Activated T-helper 1 cell treated with anti-CD3 and anti-CD28 coated beads, Interleukin-12 subunit alpha, Interleukin-12 subunit beta, Interleukin-2, Interleukin-4 antibody, amounts not matched to agents 30 ng/mL and 10 ng/mL and 1 ng/mL, durations not matched to agents 14 hours and 24 hours and 36 hours (primary cell): ENCODE measurements at regions of chr1 and their contacts with region 1.

Region 1: GRCh38 chr1:243255791-243256512 is at the start of gene SDCCAG8:
- DNase-seq: peak; percentile 94
- H3K4me3 Mint-ChIP-seq: peak within 1 kb of the TSS; percentile 95
- H3K27ac Mint-ChIP-seq: peak within 1 kb of the TSS; percentile 99
- H3K4me1 Mint-ChIP-seq: peaks cover 36% of the 10 kb centered on the region
- H3K27me3 Mint-ChIP-seq: no peaks in the 10 kb centered on the region
- total RNA-seq, gene SDCCAG8: 14.6 and 17.6 TPM in 2 replicates

Region 2: GRCh38 chr1:241640029-241640818 is 1615.7 kb before region 1 on chr1 and contains the starts of genes CHML and OPN3:
- intact Hi-C with region 1: loop called (anchors 2 kb)
- DNase-seq: peak; percentile 90
- H3K4me3 Mint-ChIP-seq: peak within 1 kb of the TSS; percentile 84
- H3K27ac Mint-ChIP-seq: peak within 1 kb of the TSS; percentile 85
- H3K4me1 Mint-ChIP-seq: peaks cover 54% of the 10 kb centered on the region
- H3K27me3 Mint-ChIP-seq: no peaks in the 10 kb centered on the region
- total RNA-seq, gene CHML: 17.8 and 20.8 TPM in 2 replicates
- total RNA-seq, gene OPN3: 9.5 and 11.1 TPM in 2 replicates

Region 3: GRCh38 chr1:242813490-242814091 is 442.4 kb before region 1 on chr1:
- intact Hi-C with region 1: no loop called
- DNase-seq: no peak
- H3K4me3 Mint-ChIP-seq: no peak overlapping the region
- H3K27ac Mint-ChIP-seq: no peak overlapping the region
- H3K4me1 Mint-ChIP-seq: no peaks in the 10 kb centered on the region
- H3K27me3 Mint-ChIP-seq: no peaks in the 10 kb centered on the region

Region 4: DNA sequence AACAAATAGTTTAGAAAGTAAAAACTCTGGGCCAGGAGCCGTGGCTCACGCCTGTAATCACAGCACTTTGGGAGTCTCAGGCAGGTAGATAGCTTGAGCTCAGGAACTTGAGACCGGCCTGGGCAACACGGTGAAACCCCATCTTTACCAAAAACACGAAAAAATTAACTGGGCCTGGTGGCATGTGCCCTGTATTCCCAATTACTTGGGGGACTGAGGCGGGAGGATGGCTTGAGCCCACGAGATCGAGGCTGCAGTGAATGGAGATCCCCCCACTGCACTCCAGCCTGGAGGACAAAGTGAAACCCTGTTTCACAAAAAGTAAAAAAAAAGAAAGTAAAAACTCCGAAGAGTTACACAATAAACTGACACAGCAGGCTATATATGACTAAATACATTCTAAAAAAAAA is 11.5 kb before region 1 on chr1:
- intact Hi-C with region 1: no loop called
- DNase-seq: no peak
- H3K4me3 Mint-ChIP-seq: no peak overlapping the region
- H3K27ac Mint-ChIP-seq: no peak overlapping the region
- H3K4me1 Mint-ChIP-seq: peaks cover 12% of the 10 kb centered on the region
- H3K27me3 Mint-ChIP-seq: no peaks in the 10 kb centered on the region

Region 5: GRCh38 chr1:243273945-243274344 is 18.0 kb after region 1 on chr1:
- intact Hi-C with region 1: loop called (anchors 1 kb)
- DNase-seq: no peak
- H3K4me3 Mint-ChIP-seq: no peak overlapping the region
- H3K27ac Mint-ChIP-seq: peak overlapping the region; percentile 61
- H3K4me1 Mint-ChIP-seq: peaks cover 6% of the 10 kb centered on the region
- H3K27me3 Mint-ChIP-seq: no peaks in the 10 kb centered on the region

Region 6: GRCh38 chr1:243364866-243365265 is 108.9 kb after region 1 on chr1:
- intact Hi-C with region 1: no loop called
- DNase-seq: no peak
- H3K4me3 Mint-ChIP-seq: no peak overlapping the region
- H3K27ac Mint-ChIP-seq: no peak overlapping the region
- H3K4me1 Mint-ChIP-seq: no peaks in the 10 kb centered on the region
- H3K27me3 Mint-ChIP-seq: no peaks in the 10 kb centered on the region

Region 7: GRCh38 chr1:243416495-243416894 is 160.5 kb after region 1 on chr1:
- intact Hi-C with region 1: loop called (anchors 2 kb)
- DNase-seq: no peak
- H3K4me3 Mint-ChIP-seq: peak overlapping the region; percentile 39
- H3K27ac Mint-ChIP-seq: peak overlapping the region; percentile 64
- H3K4me1 Mint-ChIP-seq: peaks cover 66% of the 10 kb centered on the region
- H3K27me3 Mint-ChIP-seq: no peaks in the 10 kb centered on the region

Region 8: DNA sequence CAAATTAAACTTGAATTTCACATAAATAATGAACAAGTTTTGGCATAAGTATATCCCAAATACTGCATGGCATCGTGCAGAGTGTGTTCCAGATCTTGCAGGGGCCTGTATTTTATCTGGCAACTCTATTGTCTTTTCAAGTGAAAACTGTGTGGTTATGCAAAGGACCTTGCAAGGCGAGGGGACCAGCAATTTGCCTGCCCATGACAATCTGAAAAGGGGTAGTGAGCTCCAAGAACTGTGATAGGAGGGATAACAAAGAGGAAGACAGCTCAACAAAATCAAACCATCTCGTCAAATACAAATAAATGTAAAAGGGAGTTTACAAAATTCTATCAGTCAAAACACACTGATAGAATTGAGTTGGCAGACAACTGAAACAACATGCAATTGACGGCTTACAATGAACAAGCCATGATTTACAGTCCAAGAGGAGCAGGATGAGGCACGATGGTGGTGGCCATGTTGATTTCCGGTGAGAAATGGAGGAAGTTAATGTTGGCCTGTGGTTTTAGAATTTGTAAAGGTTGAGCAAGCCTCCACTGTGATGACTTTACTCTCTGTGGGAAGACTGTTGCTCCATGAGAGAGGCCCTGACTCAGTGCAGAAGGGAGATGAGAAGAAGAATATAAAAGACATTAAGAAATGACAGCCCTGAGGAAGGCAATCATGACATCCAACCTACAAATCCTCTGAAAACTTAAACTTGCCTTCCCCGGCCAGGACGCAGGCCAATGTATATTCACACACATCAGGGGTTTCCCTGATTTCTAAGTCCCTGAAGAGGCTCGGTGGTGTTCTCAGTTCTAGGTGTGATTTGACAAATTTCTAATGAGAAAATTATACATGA is 1063.6 kb after region 1 on chr1:
- intact Hi-C with region 1: loop called (anchors 1 kb)
- DNase-seq: peak; percentile 59
- H3K4me3 Mint-ChIP-seq: peak overlapping the region; percentile 62
- H3K27ac Mint-ChIP-seq: peak overlapping the region; percentile 89
- H3K4me1 Mint-ChIP-seq: peaks cover 54% of the 10 kb centered on the region
- H3K27me3 Mint-ChIP-seq: peaks cover 1% of the 10 kb centered on the region

Region 9: GRCh38 chr1:244835276-244836134 is 1579.6 kb after region 1 on chr1 and contains the start of gene COX20:
- intact Hi-C with region 1: loop called (anchors 10 kb)
- DNase-seq: peak; percentile 85
- H3K4me3 Mint-ChIP-seq: peak within 1 kb of the TSS; percentile 96
- H3K27ac Mint-ChIP-seq: peak within 1 kb of the TSS; percentile 99
- H3K4me1 Mint-ChIP-seq: peaks cover 56% of the 10 kb centered on the region
- H3K27me3 Mint-ChIP-seq: no peaks in the 10 kb centered on the region
- total RNA-seq, gene COX20: 27.4 and 27.6 TPM in 2 replicates